A549 (cell line): ENCODE measurements at regions of chr9 and their contacts with region 1.

Region 1: DNA sequence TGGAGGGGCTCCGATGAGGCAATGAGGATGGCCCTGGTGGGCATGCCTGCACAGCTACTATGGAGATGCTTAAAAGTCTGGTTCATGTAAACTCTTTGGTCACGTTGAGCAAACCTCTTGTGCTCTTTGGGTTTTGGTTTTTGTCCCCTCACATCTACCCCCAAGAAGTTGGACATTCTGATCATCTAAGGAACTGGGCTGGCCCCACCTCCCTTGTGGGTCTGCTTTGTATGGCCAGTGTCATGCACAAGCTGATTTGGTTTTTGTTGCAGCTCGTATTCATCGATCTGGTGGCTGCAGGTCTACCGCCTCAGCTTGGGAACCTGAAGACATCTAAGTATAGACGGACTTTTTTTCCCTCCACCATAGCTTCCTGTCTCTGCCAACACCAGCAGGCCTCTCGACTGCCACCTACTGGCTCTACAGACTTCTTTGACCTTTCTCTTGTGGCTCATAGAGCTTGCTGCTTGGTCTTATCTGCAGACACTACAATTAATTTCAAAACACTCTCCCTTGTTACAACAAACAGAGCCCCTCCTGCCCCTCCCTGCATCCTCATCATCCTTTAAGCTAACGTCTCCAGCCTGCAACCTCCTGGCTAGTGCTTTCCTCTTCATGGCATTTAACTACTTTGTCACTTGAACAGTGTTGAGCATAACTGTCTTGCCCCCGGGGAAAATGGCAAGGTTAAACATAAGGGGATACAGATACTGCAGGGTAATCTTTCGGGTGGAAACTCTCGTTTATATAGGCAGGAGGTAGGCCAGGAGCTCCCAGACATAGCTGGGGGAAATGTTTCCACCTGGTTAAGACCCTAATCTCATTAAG is 34.5 kb downstream of the TSTD2 start:
- DNase-seq: peak; percentile 61 to 81
- ATAC-seq: peak; percentile 89 to 94
- H3K4me3 ChIP-seq: no peak overlapping the region
- H3K27ac ChIP-seq: no peak overlapping the region
- H3K4me1 ChIP-seq: no peaks in the 10 kb centered on the region
- CTCF ChIP-seq: peak; percentile 83
- EP300 ChIP-seq: no peak
- POLR2A ChIP-seq: no peak
- RAD21 ChIP-seq: peak; percentile 72 to 75

Region 2: DNA sequence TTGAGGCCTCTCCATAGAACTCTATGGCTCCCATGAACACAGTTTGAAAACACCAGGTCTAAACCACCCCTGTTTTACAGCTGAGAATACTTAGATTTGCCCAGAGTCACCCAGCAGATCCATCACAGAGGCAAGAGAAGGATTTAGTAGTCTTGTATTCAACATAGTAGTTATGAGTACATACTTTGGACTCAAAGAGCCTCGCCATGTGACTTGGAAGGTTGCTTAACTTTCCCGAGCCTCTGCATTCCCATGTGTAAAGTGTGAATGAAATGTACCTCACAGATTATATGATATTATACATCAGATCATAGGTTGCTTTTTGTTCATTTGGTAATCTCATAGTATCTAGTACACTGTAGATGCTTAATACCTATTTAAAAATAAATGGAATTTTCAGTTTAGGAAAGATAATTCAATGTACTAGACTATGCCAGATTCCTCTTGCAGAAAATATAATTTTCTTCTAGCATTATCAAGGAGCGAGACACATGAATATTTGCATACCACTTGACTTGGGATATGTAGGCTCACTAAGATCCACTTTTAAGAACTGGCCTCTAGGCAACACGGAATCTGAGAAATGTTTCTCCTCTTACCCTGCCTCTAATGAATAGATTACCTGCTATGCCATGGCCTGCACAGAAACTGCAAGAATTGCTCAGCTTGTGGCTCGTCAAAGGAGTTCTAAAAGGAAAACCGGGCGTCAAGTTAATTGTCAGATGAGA is 168.2 kb before region 1 on chr9:
- CTCF ChIA-PET with region 1: interaction called, 12 read pairs
- POLR2A ChIA-PET with region 1: no interaction called
- DNase-seq: no peak
- ATAC-seq: no peak
- H3K4me3 ChIP-seq: no peak overlapping the region
- H3K27ac ChIP-seq: no peak overlapping the region
- H3K4me1 ChIP-seq: no peaks in the 10 kb centered on the region
- CTCF ChIP-seq: no peak
- EP300 ChIP-seq: no peak
- POLR2A ChIP-seq: no peak
- RAD21 ChIP-seq: no peak

Region 3: DNA sequence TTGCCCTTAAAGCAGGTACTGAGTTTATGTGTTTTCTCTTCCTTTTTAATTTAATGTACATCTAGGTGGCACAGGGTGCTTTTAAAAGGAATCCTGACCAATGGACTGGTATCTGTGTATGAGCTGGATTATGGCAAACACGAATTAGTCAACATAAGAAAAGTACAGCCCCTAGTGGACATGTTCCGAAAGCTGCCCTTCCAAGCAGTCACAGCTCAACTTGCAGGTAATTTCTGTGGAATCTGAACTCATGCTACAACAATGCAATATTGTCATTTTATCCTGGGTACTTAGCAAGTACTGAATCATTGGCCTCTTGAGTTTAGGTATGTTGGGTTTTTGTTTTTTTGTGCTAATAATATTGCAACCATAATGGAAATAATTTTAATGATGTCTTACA is 111.6 kb before region 1 on chr9:
- CTCF ChIA-PET with region 1: interaction called, 20 read pairs
- POLR2A ChIA-PET with region 1: no interaction called
- DNase-seq: peak in 1 of 2 experiments; percentile 37
- ATAC-seq: peak; percentile 50 to 74; a peak in 5 of 6 replicates
- H3K4me3 ChIP-seq: no peak overlapping the region
- H3K27ac ChIP-seq: no peak overlapping the region
- H3K4me1 ChIP-seq: no peaks in the 10 kb centered on the region
- CTCF ChIP-seq: peak; percentile 7; the same call in 1 of the 3 replicates
- EP300 ChIP-seq: no peak
- POLR2A ChIP-seq: no peak
- RAD21 ChIP-seq: 0 out of 5 replicates have a peak, but pooled peaks of 1 of the 2 experiments have one; percentile 19

Region 4: GRCh38 chr9:97548819-97549540 is 49.7 kb before region 1 on chr9:
- CTCF ChIA-PET with region 1: interaction called, 10 read pairs
- POLR2A ChIA-PET with region 1: no interaction called
- DNase-seq: no peak
- ATAC-seq: no peak
- H3K4me3 ChIP-seq: no peak overlapping the region
- H3K27ac ChIP-seq: no peak overlapping the region
- H3K4me1 ChIP-seq: no peaks in the 10 kb centered on the region
- CTCF ChIP-seq: no peak
- EP300 ChIP-seq: no peak
- POLR2A ChIP-seq: no peak
- RAD21 ChIP-seq: no peak

Region 5: DNA sequence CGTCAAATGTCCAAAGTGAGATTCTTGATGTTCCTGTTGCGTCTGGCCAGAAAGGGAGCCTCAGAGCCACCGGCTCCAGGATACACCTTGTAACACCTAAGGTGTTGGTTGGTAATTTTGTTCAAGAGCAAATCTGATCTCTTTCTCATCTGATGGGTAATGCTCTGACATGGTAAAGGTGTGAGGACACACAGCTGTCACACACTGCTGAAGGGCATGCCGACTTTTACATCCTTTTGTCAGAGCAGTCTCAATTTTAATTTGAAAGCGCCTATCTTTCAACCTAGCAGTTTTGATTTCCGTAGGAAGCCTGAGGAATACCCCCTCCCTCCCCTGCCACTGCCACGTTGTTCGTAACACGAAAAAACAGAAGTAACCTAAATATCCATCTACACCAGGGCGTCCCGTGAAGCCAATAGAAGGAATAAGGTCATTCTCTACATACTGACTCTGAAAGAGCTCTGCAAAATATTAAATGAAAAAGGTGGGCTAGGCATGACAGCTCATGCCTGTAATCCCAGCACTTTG is 22.9 kb before region 1 on chr9:
- CTCF ChIA-PET with region 1: interaction called, 15 read pairs
- POLR2A ChIA-PET with region 1: no interaction called
- DNase-seq: no peak
- ATAC-seq: no peak
- H3K4me3 ChIP-seq: no peak overlapping the region
- H3K27ac ChIP-seq: no peak overlapping the region
- H3K4me1 ChIP-seq: no peaks in the 10 kb centered on the region
- CTCF ChIP-seq: no peak
- EP300 ChIP-seq: no peak
- POLR2A ChIP-seq: no peak
- RAD21 ChIP-seq: no peak